ENCODE measurements at regions of chr10 and their contacts with region 1.

Region 1: DNA sequence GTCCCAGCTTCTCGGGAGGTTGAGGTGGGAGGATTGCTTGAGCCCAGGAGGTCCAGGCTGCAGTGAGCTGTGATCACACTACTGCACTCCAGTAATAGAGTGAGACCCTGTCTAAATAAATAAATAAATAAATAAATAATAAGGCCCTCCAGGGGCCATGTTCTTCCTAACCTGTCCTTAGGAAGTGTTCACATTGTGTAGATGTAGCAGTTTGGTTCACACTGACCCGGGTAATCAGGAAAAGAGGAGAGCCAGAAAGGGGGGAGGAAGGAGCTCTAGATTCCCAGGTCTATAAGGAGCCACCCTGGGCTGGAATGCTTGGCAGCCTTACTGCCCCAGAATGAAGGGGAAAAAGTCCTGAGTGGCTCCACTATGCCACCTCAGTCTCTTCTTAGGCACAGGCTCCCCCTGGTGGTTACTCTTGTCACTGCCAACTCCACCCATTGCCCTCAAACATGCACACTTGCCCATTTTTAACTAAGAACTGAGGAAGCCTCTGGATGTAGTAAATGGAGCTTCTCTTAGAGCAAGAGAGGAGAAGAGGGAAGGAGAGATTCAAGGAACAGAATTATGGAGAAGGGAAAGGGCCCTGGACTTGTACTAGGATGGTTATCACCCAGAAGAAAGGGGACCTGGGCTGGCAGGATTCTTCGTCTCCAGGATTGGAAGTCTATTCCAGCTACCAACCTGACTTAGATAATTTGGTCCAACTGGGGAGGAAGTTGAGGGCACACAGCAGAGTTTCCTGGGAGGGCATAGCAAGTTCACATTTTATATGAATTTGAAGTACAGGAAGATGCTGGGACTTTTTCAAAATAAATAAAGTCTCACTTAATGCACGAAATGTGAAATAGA is 7.8 kb downstream of the HPS6 start:
- DNase-seq: peak; percentile 60 to 82 (median 69)
- H3K4me3 ChIP-seq: no peak overlapping the region
- H3K4me3 Mint-ChIP-seq: no peak overlapping the region
- H3K27ac ChIP-seq: no peak overlapping the region
- H3K27ac Mint-ChIP-seq: no peak overlapping the region
- H3K4me1 ChIP-seq: peaks cover 5% of the 10 kb centered on the region
- H3K4me1 Mint-ChIP-seq: peaks cover 4 to 19% (median 11%) of the 10 kb centered on the region in 3 donors
- H3K27me3 ChIP-seq: no peaks in the 10 kb centered on the region
- H3K27me3 Mint-ChIP-seq: no peaks in the 10 kb centered on the region

Region 2: DNA sequence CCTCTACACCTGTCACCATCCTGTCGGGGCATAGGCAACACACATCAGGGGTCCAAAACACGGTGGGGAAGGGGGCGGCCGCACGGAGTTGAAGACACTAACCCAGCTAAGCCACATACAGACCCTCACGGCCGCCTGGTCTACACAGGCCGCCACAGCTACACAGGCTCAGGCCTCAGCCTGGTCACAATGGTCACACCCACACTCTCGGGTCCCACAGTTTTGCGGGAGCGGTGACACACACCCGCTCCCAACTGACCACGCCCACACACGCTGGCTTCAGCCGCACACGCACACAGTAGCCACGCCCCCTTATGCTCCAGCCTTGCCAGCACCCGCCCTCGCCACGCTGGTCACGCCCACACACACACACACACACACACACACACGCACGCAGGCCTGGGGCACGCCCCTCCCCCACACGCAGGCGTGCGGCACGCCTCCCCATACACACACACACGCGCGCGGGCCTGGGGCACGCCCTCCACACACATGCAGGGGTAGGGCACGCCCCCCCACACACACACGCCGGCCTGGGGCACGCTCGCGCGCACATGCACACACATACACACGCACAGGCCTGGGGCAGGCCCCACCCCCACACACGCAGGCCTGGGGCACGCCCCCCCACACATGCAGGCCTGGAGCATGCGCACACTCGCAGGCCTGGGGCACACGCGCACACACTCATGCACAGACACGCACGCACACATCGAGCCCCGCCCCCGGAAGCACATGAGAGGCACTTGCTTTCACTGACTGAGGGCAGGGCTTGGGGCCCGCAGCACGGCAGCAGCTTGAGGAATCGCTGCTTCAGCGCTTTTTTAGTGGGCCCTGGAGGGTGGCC is 242.4 kb before region 1 on chr10:
- CTCF ChIA-PET with region 1: interaction called, 10 read pairs
- POLR2A ChIA-PET with region 1: no interaction called
- DNase-seq: peak; percentile 92 to 96 (median 93)
- H3K4me3 ChIP-seq: peak overlapping the region; percentile 56
- H3K4me3 Mint-ChIP-seq: peak overlapping the region; percentile 88 to 94 (median 91)
- H3K27ac ChIP-seq: peak overlapping the region; percentile 52
- H3K27ac Mint-ChIP-seq: peak overlapping the region; percentile 95 to 99 (median 97)
- H3K4me1 ChIP-seq: peaks cover 55% of the 10 kb centered on the region
- H3K4me1 Mint-ChIP-seq: peaks cover 42 to 61% (median 49%) of the 10 kb centered on the region in 3 donors
- H3K27me3 ChIP-seq: no peaks in the 10 kb centered on the region
- H3K27me3 Mint-ChIP-seq: peaks cover 0 to 10% of the 10 kb centered on the region in 2 donors

Region 3: GRCh38 chr10:101889256-101890210 is 183.4 kb before region 1 on chr10:
- CTCF ChIA-PET with region 1: interaction called, 24 read pairs
- POLR2A ChIA-PET with region 1: no interaction called
- DNase-seq: peak; percentile 29 to 71 (median 42)
- H3K4me3 ChIP-seq: no peak overlapping the region
- H3K4me3 Mint-ChIP-seq: no peak overlapping the region
- H3K27ac ChIP-seq: no peak overlapping the region
- H3K27ac Mint-ChIP-seq: peak overlapping the region in 5 of 8 donors; percentile 19 to 66 (median 23)
- H3K4me1 ChIP-seq: no peaks in the 10 kb centered on the region
- H3K4me1 Mint-ChIP-seq: peaks cover 0 to 17% (median 5%) of the 10 kb centered on the region in 3 donors
- H3K27me3 ChIP-seq: no peaks in the 10 kb centered on the region
- H3K27me3 Mint-ChIP-seq: no peaks in the 10 kb centered on the region

Region 4: GRCh38 chr10:102055647-102056419 is 17.1 kb before region 1 on chr10 and contains the start of gene ARMH3:
- CTCF ChIA-PET with region 1: interaction called, 14 read pairs
- POLR2A ChIA-PET with region 1: no interaction called
- DNase-seq: peak; percentile 75 to 92 (median 87)
- H3K4me3 ChIP-seq: peak within 1 kb of the TSS; percentile 93
- H3K4me3 Mint-ChIP-seq: peak within 1 kb of the TSS; percentile 92 to 99 (median 95)
- H3K27ac ChIP-seq: peak within 1 kb of the TSS; percentile 91
- H3K27ac Mint-ChIP-seq: peak within 1 kb of the TSS; percentile 85 to 99 (median 96)
- H3K4me1 ChIP-seq: peaks cover 35% of the 10 kb centered on the region
- H3K4me1 Mint-ChIP-seq: peaks cover 39 to 48% (median 47%) of the 10 kb centered on the region in 3 donors
- H3K27me3 ChIP-seq: no peaks in the 10 kb centered on the region
- H3K27me3 Mint-ChIP-seq: peaks cover 0 to 2% of the 10 kb centered on the region in 2 donors
- total RNA-seq, gene ARMH3: 23.1 to 25.7 TPM

Region 5: GRCh38 chr10:102114861-102115618 is 42.1 kb after region 1 on chr10:
- CTCF ChIA-PET with region 1: interaction called, 19 read pairs
- POLR2A ChIA-PET with region 1: interaction called, 7 read pairs
- DNase-seq: peak; percentile 67 to 85 (median 79)
- H3K4me3 ChIP-seq: peak overlapping the region; percentile 73
- H3K4me3 Mint-ChIP-seq: peak overlapping the region; percentile 86 to 97 (median 91)
- H3K27ac ChIP-seq: peak overlapping the region; percentile 48
- H3K27ac Mint-ChIP-seq: peak overlapping the region; percentile 84 to 98 (median 92)
- H3K4me1 ChIP-seq: peaks cover 72% of the 10 kb centered on the region
- H3K4me1 Mint-ChIP-seq: peaks cover 66 to 79% (median 67%) of the 10 kb centered on the region in 3 donors
- H3K27me3 ChIP-seq: no peaks in the 10 kb centered on the region
- H3K27me3 Mint-ChIP-seq: no peaks in the 10 kb centered on the region

Region 6: DNA sequence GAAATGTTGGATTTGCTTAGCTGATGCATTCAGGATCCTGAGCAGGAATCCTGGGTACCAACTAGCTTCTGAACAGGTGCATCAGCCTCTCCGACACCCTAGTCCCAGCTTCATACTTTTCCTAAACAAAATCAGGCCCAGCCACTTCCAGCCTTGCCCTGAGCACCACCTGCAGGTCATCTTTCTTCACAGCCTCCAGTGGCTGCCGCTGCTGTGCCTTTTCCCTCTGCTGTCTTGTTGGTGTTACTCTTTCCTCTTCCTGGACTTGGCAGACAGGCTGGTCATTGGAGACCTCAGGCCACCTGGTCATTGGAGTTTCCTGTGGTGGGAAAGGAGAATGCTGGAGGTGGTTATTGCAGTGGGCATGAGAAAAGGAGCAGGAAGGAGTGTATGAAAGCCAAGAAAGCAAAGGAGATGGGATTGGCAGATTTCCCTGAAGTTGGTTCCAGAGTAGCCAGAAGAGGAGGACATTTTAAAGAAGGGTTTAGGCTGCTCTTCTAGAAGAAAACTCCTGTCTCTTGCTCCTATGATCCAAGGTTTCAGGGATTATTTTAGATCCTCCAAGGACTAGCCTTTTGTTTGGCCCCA is 274.4 kb after region 1 on chr10:
- CTCF ChIA-PET with region 1: no interaction called
- POLR2A ChIA-PET with region 1: no interaction called
- DNase-seq: no peak
- H3K4me3 ChIP-seq: no peak overlapping the region
- H3K4me3 Mint-ChIP-seq: no peak overlapping the region
- H3K27ac ChIP-seq: no peak overlapping the region
- H3K27ac Mint-ChIP-seq: peak overlapping the region in 3 of 8 donors; percentile 17 to 79 (median 63)
- H3K4me1 ChIP-seq: no peaks in the 10 kb centered on the region
- H3K4me1 Mint-ChIP-seq: peaks cover 0 to 3% (median 0%) of the 10 kb centered on the region in 3 donors
- H3K27me3 ChIP-seq: no peaks in the 10 kb centered on the region
- H3K27me3 Mint-ChIP-seq: no peaks in the 10 kb centered on the region